ENCODE measurements at regions of chr10 and their contacts with region 1.

Region 1: GRCh38 chr10:100998991-100999741 is 442 bp upstream of the LZTS2 start:
- DNase-seq: peak; percentile 73
- H3K4me3 Mint-ChIP-seq: peak overlapping the region; percentile 84
- H3K27ac Mint-ChIP-seq: peak overlapping the region; percentile 82
- H3K4me1 Mint-ChIP-seq: peaks cover 18% of the 10 kb centered on the region
- H3K27me3 Mint-ChIP-seq: no peaks in the 10 kb centered on the region

Region 2: DNA sequence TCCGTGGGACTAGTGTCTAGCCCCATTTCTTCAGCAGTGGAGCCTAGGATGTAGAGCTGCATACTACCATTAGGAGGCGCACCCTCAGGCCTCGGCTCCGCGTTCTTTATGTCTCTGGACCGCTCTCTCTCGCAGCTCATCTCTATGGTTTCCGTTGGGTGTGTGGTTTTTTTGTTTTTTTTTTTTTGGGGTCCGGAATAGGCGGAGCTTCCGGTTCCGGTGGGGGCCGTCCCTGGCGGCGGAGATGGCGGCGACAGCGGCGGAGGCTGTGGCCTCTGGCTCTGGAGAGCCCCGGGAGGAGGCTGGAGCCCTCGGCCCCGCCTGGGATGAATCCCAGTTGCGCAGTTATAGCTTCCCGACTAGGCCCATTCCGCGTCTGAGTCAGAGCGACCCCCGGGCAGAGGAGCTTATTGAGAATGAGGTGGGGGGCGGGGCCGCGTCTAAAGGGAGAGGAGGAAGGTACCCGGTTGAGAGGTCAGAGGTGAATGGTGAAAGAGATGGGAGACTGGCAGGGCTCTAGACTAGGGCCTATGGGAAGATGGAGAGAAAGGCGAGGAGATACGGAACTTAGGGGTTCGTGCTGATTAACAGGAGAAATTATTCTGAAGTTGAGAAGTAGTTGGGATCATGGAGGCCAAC is 463.3 kb before region 1 on chr10 and contains the start of gene HIF1AN:
- CTCF ChIA-PET with region 1: no interaction called
- intact Hi-C with region 1: loop called (anchors 5 kb)
- DNase-seq: peak; percentile 95
- H3K4me3 Mint-ChIP-seq: no peak within 1 kb of the TSS
- H3K27ac Mint-ChIP-seq: peak within 1 kb of the TSS; percentile 26
- H3K4me1 Mint-ChIP-seq: peaks cover 18% of the 10 kb centered on the region
- H3K27me3 Mint-ChIP-seq: no peaks in the 10 kb centered on the region
- total RNA-seq, gene HIF1AN: 34.6 to 38.4 TPM

Region 3: GRCh38 chr10:100969187-100970075 is 29.7 kb before region 1 on chr10 and contains the start of gene SEMA4G:
- CTCF ChIA-PET with region 1: interaction called, 12 read pairs
- intact Hi-C with region 1: no loop called
- DNase-seq: peak; percentile 32
- H3K4me3 Mint-ChIP-seq: peak within 1 kb of the TSS; percentile 59
- H3K27ac Mint-ChIP-seq: no peak within 1 kb of the TSS
- H3K4me1 Mint-ChIP-seq: peaks cover 8% of the 10 kb centered on the region
- H3K27me3 Mint-ChIP-seq: no peaks in the 10 kb centered on the region
- total RNA-seq, gene SEMA4G: 0.48 to 0.59 TPM

Region 4: GRCh38 chr10:101012525-101013364 is 13.6 kb after region 1 on chr10:
- CTCF ChIA-PET with region 1: interaction called, 94 read pairs
- intact Hi-C with region 1: loop called (anchors 1 kb)
- DNase-seq: peak; percentile 85
- H3K4me3 Mint-ChIP-seq: no peak overlapping the region
- H3K27ac Mint-ChIP-seq: no peak overlapping the region
- H3K4me1 Mint-ChIP-seq: peaks cover 12% of the 10 kb centered on the region
- H3K27me3 Mint-ChIP-seq: peaks cover 29% of the 10 kb centered on the region

Region 5: DNA sequence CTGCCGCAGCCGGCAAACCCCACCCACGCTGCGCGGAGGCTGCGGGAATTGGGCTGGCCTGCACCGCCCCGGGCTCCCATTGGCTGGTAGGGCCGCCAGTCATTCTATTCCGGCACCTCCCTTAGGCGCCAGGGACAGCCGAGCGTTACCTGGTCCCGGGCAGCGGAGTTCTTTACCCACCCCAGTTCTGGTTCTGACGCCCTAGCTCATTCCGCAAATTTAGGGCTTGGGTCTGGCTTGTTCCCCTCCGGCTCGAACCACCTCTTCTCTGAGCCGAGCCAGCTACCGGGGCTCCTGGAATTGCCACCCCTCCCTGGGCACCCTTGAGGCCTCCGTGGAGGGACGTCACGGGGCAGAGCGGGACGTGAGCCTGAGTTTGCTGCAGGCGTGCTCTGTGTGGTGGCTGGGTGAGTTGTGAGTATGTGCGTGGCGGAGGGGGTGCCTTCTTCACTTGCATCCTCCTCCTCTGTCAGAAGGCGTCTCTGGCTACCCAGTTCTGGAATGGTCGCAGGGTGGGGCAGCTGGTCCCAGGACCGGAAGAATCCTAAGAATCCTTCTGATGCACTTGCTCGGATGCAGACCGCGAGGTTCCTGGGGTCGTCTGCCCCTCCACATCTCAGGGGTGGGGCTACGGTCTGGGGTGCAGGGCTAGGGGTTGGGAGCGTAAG is 32.1 kb after region 1 on chr10 and contains the starts of genes PDZD7 and SFXN3:
- CTCF ChIA-PET with region 1: interaction called, 21 read pairs
- intact Hi-C with region 1: loop called (anchors 1 kb)
- DNase-seq: peak; percentile 97
- H3K4me3 Mint-ChIP-seq: peak within 1 kb of the TSS; percentile 73
- H3K27ac Mint-ChIP-seq: peak within 1 kb of the TSS; percentile 64
- H3K4me1 Mint-ChIP-seq: peaks cover 12% of the 10 kb centered on the region
- H3K27me3 Mint-ChIP-seq: no peaks in the 10 kb centered on the region
- total RNA-seq, gene PDZD7: 0.37 to 0.62 TPM
- total RNA-seq, gene SFXN3: 15.7 to 17.1 TPM

Region 6: GRCh38 chr10:101060036-101060950 is 61.1 kb after region 1 on chr10:
- CTCF ChIA-PET with region 1: interaction called, 6 read pairs
- intact Hi-C with region 1: loop called (anchors 2 kb)
- DNase-seq: peak; percentile 96
- H3K4me3 Mint-ChIP-seq: peak overlapping the region; percentile 87
- H3K27ac Mint-ChIP-seq: peak overlapping the region; percentile 93
- H3K4me1 Mint-ChIP-seq: peaks cover 29% of the 10 kb centered on the region
- H3K27me3 Mint-ChIP-seq: peaks cover 24% of the 10 kb centered on the region